Mammary epithelial cell (primary cell): ENCODE measurements at regions of chr2 and their contacts with region 1.

Region 1: DNA sequence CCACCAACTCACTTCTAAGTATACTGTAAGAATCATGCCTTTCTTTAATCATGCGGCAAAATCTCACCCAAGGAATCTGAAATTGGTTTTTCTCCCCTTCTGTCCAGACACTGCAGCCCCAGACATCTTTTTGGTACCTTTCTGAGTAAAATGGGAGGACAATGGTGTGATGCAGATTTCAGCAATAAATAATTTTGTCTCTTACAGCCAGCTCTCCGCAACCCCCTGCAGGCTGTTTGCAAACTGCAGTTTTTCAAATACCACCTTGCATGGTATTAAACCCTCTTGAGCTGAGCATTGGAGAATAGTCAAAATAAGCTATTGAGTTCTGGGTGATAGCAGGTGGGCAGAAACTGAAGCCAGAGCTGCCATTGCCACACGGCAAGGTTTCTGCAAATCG is 32.2 kb downstream of the GPR39 start:
- DNase-seq: no peak
- H3K4me3 ChIP-seq: no peak overlapping the region
- H3K27ac ChIP-seq: no peak overlapping the region
- H3K4me1 ChIP-seq: no peaks in the 10 kb centered on the region
- H3K27me3 ChIP-seq: no peaks in the 10 kb centered on the region
- CTCF ChIP-seq: peak; percentile 62 to 73

Region 2: DNA sequence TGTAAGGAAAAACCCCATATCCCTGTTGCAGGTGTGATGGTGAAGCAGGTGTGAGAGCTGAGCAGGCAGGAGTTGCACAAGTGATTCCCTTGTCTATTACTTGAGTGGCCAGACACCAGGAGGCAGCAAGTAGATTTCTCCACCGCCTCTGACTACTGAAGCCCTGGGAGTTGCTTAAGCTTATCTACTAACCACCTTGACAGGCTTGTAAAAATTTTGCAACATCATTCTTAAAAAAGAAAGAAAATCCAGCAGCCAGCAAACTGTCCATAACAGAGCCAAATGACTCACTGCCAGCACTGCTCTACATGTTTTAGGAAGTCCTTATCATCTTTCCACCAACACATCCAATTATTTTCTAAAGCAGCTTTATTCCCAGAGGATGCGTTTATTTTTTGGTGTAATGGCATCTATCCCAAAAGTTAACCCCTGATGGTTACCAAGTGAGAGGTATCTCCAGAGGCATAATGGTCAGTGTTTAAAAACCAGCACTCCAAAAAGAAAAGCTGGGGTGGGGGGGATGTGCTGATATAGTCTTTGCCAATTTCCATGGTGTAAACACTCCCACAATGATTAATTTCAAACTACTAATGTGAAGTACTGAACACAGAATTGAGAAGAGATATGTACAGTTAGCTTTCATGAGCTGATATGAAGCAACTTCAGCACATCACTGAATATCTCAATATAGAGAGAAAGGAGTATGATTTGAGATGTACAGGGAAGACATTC is 48.4 kb before region 1 on chr2:
- CTCF ChIA-PET with region 1: no interaction called
- dilution Hi-C with region 1: no loop called
- in situ Hi-C with region 1: no loop called
- intact Hi-C with region 1: loop called (anchors 1 kb)
- DNase-seq: peak; percentile 72
- H3K4me3 ChIP-seq: no peak overlapping the region
- H3K27ac ChIP-seq: no peak overlapping the region
- H3K4me1 ChIP-seq: no peaks in the 10 kb centered on the region
- H3K27me3 ChIP-seq: no peaks in the 10 kb centered on the region
- CTCF ChIP-seq: peak in 1 of 2 donors; percentile 48

Region 3: GRCh38 chr2:132468821-132469675 is 20.3 kb after region 1 on chr2:
- CTCF ChIA-PET with region 1: no interaction called
- dilution Hi-C with region 1: no loop called
- in situ Hi-C with region 1: no loop called
- intact Hi-C with region 1: no loop called
- DNase-seq: no peak
- H3K4me3 ChIP-seq: no peak overlapping the region
- H3K27ac ChIP-seq: no peak overlapping the region
- H3K4me1 ChIP-seq: no peaks in the 10 kb centered on the region
- H3K27me3 ChIP-seq: no peaks in the 10 kb centered on the region
- CTCF ChIP-seq: no peak